Posterior vena cava (tissue), 2 donors: ENCODE measurements at regions of chr1 and their contacts with region 1.

Region 1: GRCh38 chr1:18481921-18482701 is 1.4 kb downstream of the KLHDC7A start:
- DNase-seq: no peak

Region 2: DNA sequence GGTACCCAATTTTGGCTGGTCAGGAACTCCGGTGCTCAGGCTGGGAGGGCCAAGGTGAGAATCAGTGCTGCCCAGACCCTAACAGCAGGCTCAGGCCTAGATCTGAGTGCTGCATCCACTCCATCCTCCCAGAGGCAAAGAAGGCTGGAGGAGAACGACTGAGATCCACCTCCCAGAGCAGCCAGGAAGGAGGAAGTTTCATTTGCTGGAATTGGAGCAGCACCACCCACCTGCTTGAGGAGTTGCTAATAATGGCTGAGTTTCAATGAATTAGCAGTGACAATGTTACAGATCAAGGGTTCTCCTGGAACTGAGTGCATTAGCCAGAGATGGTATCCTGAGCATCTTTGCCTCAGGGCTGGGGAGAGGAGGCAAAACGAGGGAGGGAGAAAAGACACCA is 48.1 kb before region 1 on chr1:
- intact Hi-C with region 1: loop called in 1 of 2 experiments (anchors 2 kb)
- DNase-seq: no peak

Region 3: GRCh38 chr1:18530587-18531502 is 48.7 kb after region 1 on chr1:
- intact Hi-C with region 1: no loop called
- DNase-seq: no peak